ENCODE measurements at regions of chr9 and their contacts with region 1.

Region 1: GRCh38 chr9:76441551-76442322 is 17.2 kb upstream of the GCNT1 start:
- H3K4me3 ChIP-seq: no peak overlapping the region
- H3K27ac ChIP-seq: no peak overlapping the region
- H3K4me1 ChIP-seq: no peaks in the 10 kb centered on the region
- CTCF ChIP-seq: no peak

Region 2: GRCh38 chr9:76458903-76459690 is 17.4 kb after region 1 on chr9 and contains the start of gene GCNT1:
- CTCF ChIA-PET with region 1: interaction called, 20 read pairs
- POLR2A ChIA-PET with region 1: interaction called, 7 read pairs
- H3K4me3 ChIP-seq: peak within 1 kb of the TSS; percentile 75
- H3K27ac ChIP-seq: peak within 1 kb of the TSS; percentile 53
- H3K4me1 ChIP-seq: peaks cover 11% of the 10 kb centered on the region
- CTCF ChIP-seq: peak; percentile 57; the same call in 1 of the 2 replicates

Region 3: DNA sequence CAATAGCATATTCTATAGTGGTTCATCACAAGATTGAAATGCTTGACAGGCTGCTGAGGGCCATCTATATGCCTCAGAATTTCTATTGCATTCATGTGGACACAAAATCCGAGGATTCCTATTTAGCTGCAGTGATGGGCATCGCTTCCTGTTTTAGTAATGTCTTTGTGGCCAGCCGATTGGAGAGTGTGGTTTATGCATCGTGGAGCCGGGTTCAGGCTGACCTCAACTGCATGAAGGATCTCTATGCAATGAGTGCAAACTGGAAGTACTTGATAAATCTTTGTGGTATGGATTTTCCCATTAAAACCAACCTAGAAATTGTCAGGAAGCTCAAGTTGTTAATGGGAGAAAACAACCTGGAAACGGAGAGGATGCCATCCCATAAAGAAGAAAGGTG is 61.0 kb after region 1 on chr9:
- CTCF ChIA-PET with region 1: no interaction called
- POLR2A ChIA-PET with region 1: no interaction called
- H3K4me3 ChIP-seq: no peak overlapping the region
- H3K27ac ChIP-seq: no peak overlapping the region
- H3K4me1 ChIP-seq: peaks cover 5% of the 10 kb centered on the region
- CTCF ChIP-seq: no peak

Region 4: GRCh38 chr9:76692458-76693129 is 250.9 kb after region 1 on chr9:
- CTCF ChIA-PET with region 1: interaction called, 13 read pairs
- POLR2A ChIA-PET with region 1: no interaction called
- H3K4me3 ChIP-seq: no peak overlapping the region
- H3K27ac ChIP-seq: no peak overlapping the region
- H3K4me1 ChIP-seq: peaks cover 3% of the 10 kb centered on the region
- CTCF ChIP-seq: no peak